Activated CD8-positive, alpha-beta T cell treated with anti-CD3 and anti-CD28 coated beads, Interleukin-2, amount 10 ng/mL, durations not matched to agents 7 days and 5 days (primary cell): ENCODE measurements at regions of chr12 and their contacts with region 1.

Region 1: DNA sequence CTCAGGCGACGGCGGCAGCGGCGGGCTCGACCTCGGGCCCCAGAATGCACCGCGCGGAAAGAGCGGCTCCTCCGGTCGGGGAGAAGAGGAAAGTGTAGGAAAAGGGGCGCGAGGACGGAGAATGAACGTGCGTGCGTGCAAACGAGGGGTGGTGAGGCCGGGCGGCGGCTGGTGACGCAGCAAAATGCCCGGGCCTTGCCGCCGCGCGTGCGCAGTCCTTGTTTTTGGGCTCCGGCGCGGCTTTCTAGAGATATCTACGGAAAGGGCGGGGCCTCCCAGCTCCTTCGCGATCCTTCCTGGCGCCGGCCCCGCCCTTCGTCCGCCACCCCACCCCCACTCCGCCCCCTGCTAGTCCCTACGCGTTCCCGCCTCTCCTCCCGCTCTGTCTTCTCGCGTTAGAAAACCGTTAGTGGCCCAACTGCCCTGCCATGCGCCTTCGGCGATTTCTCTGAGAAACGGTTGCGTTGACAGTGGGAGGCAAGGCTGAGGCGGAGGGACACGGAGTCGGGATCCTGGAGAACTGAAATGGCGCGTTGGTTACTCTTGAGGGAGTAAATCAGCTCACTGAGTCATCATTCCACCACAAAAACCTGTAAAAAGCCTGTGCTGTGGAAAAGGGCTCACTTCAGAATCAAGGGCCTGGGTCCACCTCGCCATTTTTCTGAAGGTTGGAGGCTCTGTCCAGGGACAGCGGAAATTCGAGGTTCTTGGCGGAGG is at the start of gene PTGES3:
- DNase-seq: peak; percentile 99
- ATAC-seq: peak; percentile 76
- H3K4me3 Mint-ChIP-seq: peak within 1 kb of the TSS; percentile 99
- H3K27ac Mint-ChIP-seq: peak within 1 kb of the TSS; percentile 99
- H3K4me1 Mint-ChIP-seq: peaks cover 17% of the 10 kb centered on the region
- H3K27me3 Mint-ChIP-seq: no peaks in the 10 kb centered on the region
- total RNA-seq, gene PTGES3: 273 to 290 TPM

Region 2: GRCh38 chr12:56152318-56153033 is 535.8 kb before region 1 on chr12 and contains the start of gene MYL6B:
- CTCF ChIA-PET with region 1: no interaction called
- POLR2A ChIA-PET with region 1: no interaction called
- DNase-seq: peak; percentile 97
- ATAC-seq: peak; percentile 91
- H3K4me3 Mint-ChIP-seq: peak within 1 kb of the TSS; percentile 92
- H3K27ac Mint-ChIP-seq: peak within 1 kb of the TSS; percentile 99
- H3K4me1 Mint-ChIP-seq: peaks cover 60% of the 10 kb centered on the region
- H3K27me3 Mint-ChIP-seq: no peaks in the 10 kb centered on the region
- total RNA-seq, gene MYL6B: 60.0 to 60.7 TPM

Region 3: DNA sequence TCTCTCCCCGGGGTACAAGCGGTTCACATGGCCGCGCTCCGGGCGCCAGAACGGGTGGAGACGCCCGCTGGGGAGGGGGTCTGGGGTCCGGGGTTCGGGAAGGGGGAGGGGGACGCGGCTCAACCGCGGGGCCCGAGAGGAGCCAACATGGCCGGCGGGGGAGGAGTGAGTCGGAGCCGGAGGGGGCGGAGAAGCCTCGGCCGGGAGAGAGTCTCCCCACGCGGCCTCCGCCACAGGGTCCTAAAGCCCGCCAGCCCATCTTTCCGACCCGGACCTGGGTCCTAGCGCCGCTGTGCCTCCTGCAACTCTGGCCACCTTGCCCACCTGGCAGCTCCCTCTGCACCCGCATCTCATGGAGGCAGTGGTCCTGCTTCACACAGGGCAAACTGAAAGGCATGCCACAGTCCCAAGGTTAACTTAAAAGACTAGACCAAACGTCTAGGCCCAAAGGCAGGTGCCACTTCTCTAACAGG is 58.1 kb before region 1 on chr12 and contains the start of gene BAZ2A:
- CTCF ChIA-PET with region 1: interaction called, 33 read pairs
- POLR2A ChIA-PET with region 1: interaction called, 27 read pairs
- DNase-seq: peak; percentile 92
- ATAC-seq: peak; percentile 74
- H3K4me3 Mint-ChIP-seq: peak within 1 kb of the TSS; percentile 84
- H3K27ac Mint-ChIP-seq: peak within 1 kb of the TSS; percentile 83
- H3K4me1 Mint-ChIP-seq: peaks cover 67% of the 10 kb centered on the region
- H3K27me3 Mint-ChIP-seq: no peaks in the 10 kb centered on the region
- total RNA-seq, gene BAZ2A: 92.2 to 96.0 TPM

Region 4: DNA sequence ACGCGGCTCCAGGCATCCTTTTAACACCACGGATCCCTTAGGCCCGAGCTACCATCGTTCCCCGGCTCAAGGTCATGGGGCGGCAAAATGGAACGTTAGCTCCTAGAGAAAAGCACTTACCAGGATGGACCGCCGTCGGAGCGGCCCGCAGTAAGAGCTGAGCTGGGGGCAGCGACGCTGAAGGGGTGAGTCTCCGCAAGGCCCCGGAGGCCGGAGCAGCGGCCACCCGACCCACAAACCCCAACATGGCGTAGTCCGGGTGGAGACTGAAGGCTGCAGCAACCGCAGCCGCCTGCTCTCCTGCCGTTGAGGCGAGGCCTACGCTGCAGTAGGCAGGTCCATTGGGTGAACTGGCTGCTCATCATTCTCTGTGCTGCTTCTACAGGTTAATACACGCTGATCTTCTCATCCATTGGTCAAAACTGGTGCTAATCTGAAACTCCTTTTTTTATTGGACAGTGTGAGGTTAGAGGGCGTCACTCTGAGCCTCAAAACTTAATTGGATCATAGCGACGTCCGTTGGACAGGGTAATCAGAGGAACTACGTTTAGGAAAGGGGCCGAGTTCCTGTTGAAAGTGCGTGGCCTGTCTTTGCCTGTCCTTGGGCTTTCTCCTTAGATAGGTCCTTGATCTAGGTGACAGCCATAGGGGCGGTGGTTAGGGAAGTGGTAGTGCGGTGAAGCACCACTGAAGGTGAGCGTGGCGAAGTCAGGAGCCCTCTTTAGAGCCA is 42.4 kb before region 1 on chr12 and contains the start of gene ATP5F1B:
- CTCF ChIA-PET with region 1: no interaction called
- POLR2A ChIA-PET with region 1: interaction called, 16 read pairs
- DNase-seq: peak; percentile 97
- ATAC-seq: peak; percentile 99
- H3K4me3 Mint-ChIP-seq: peak within 1 kb of the TSS; percentile 98
- H3K27ac Mint-ChIP-seq: peak within 1 kb of the TSS; percentile 99
- H3K4me1 Mint-ChIP-seq: peaks cover 36% of the 10 kb centered on the region
- H3K27me3 Mint-ChIP-seq: no peaks in the 10 kb centered on the region
- total RNA-seq, gene ATP5F1B: 669 to 680 TPM

Region 5: GRCh38 chr12:56699020-56699661 is 10.9 kb after region 1 on chr12:
- CTCF ChIA-PET with region 1: interaction called, 5 read pairs
- POLR2A ChIA-PET with region 1: interaction called, 11 read pairs
- DNase-seq: no peak
- ATAC-seq: no peak
- H3K4me3 Mint-ChIP-seq: no peak overlapping the region
- H3K27ac Mint-ChIP-seq: no peak overlapping the region
- H3K4me1 Mint-ChIP-seq: peaks cover 17% of the 10 kb centered on the region
- H3K27me3 Mint-ChIP-seq: peaks cover 2% of the 10 kb centered on the region

Region 6: GRCh38 chr12:56716458-56716857 is 28.2 kb after region 1 on chr12:
- CTCF ChIA-PET with region 1: interaction called, 3 read pairs
- POLR2A ChIA-PET with region 1: interaction called, 119 read pairs
- DNase-seq: no peak
- ATAC-seq: no peak
- H3K4me3 Mint-ChIP-seq: no peak overlapping the region
- H3K27ac Mint-ChIP-seq: peak overlapping the region; percentile 18
- H3K4me1 Mint-ChIP-seq: peaks cover 56% of the 10 kb centered on the region
- H3K27me3 Mint-ChIP-seq: no peaks in the 10 kb centered on the region

Region 7: DNA sequence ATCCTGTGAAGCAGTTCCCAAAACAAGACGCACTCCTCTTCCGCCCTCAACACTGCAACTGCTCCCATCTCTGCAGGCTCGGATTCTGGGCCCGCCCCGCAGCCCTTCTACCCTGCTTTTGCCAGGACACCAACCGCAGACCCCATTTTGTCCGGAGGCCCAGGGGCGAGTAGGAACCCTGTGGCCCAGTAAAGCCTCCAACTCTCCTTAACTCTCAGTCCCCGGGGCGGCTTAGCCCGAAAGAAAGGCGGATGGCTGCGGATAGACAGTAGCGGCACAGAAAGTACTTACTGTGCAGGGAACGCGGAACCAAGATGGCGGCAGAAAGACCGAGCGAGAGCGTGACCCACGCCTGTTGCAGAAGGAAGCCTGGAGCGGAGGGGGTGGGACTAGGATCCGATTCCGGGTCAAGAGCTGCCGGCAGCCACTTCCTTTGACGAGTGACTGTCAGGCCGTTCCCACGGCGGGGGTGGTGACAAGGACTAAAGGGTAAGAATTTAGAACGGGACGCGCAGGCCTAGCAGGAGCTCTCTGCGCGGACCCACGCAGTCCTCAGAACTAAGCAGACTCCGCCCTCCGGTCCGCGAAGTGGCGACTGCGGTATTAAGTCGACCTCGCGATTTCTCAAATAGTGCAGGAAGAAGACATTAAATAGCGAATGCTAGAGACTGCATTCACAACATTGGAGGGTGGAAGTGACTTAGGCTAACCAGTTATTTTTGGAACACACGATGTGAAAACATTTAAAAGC is 36.9 kb after region 1 on chr12 and contains the start of gene NACA:
- CTCF ChIA-PET with region 1: interaction called, 9 read pairs
- POLR2A ChIA-PET with region 1: interaction called, 119 read pairs
- DNase-seq: peak; percentile 100
- ATAC-seq: peak; percentile 98
- H3K4me3 Mint-ChIP-seq: peak within 1 kb of the TSS; percentile 98
- H3K27ac Mint-ChIP-seq: peak within 1 kb of the TSS; percentile 97
- H3K4me1 Mint-ChIP-seq: peaks cover 50% of the 10 kb centered on the region
- H3K27me3 Mint-ChIP-seq: no peaks in the 10 kb centered on the region
- total RNA-seq, gene NACA: 793 to 820 TPM